ENCODE measurements at regions of chr10 and their contacts with region 1.

Region 1: DNA sequence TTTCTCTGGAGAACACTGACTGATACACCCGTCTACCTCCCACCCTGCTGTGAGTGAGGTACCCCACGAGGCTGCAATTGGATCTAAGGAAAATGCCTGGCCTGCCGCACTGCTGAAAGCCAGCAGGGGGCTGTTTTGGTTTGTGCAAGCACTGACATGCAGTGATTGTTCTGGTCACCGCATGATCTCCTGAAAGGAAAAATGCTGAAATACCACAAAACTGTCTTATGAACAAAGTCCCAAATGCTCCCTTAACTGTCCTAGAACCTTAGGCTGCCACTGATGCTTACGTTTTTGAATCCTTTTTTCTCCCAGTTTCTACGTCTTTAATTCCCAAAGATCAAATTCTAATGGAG is 132.7 kb downstream of the JCAD start:
- DNase-seq: no peak

Region 2: GRCh38 chr10:29862926-29863614 is 63.6 kb before region 1 on chr10:
- intact Hi-C with region 1: no loop called
- DNase-seq: no peak

Region 3: DNA sequence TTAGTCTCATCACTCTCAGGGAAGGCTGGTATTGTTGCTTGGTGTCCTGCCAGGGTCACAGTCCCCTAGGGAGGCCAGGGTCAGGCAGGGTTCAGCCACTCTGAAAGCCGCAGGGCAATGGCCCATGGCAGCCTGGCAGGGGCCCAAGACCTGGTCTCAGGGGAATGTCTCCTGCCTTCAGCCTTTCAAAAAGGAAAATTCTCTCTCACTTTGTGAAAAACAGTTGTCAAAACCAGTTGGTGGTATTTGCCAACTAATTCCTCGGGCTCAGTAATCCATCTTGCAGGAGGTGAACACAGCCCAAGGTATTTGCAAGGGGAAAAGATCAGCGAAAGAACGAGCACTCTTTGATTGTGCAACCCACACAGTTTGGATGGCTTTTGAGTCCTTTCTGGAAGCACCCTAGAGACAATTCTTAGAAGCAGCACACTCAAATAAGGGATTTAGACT is 31.3 kb after region 1 on chr10:
- intact Hi-C with region 1: loop called (anchors 1 kb)
- DNase-seq: no peak

Measured in head of caudate nucleus (tissue), 42 donors.